HepG2 (cell line): ENCODE measurements at regions of chr16 and their contacts with region 1.

Region 1: GRCh38 chr16:65671-66137 is 6.7 kb downstream of the RHBDF1 start:
- DNase-seq: peak; percentile 56
- ATAC-seq: peak; percentile 82
- H3K4me3 ChIP-seq: no peak overlapping the region
- H3K27ac ChIP-seq: no peak overlapping the region
- H3K4me1 ChIP-seq: peaks cover 46% of the 10 kb centered on the region
- H3K27me3 ChIP-seq: no peaks in the 10 kb centered on the region
- CTCF ChIP-seq: peak; percentile 99
- EP300 ChIP-seq: no peak
- POLR2A ChIP-seq: no peak
- RAD21 ChIP-seq: peak; percentile 99

Region 2: GRCh38 chr16:38939-39892 is 26.5 kb before region 1 on chr16:
- CTCF ChIA-PET with region 1: no interaction called
- POLR2A ChIA-PET with region 1: no interaction called
- in situ Hi-C with region 1: no loop called
- intact Hi-C with region 1: no loop called
- DNase-seq: no peak
- ATAC-seq: no peak
- H3K4me3 ChIP-seq: no peak overlapping the region
- H3K27ac ChIP-seq: no peak overlapping the region
- H3K4me1 ChIP-seq: peaks cover 14% of the 10 kb centered on the region
- H3K27me3 ChIP-seq: no peaks in the 10 kb centered on the region
- CTCF ChIP-seq: no peak
- EP300 ChIP-seq: no peak
- POLR2A ChIP-seq: no peak; a peak in 1 of 4 replicates
- RAD21 ChIP-seq: no peak

Region 3: DNA sequence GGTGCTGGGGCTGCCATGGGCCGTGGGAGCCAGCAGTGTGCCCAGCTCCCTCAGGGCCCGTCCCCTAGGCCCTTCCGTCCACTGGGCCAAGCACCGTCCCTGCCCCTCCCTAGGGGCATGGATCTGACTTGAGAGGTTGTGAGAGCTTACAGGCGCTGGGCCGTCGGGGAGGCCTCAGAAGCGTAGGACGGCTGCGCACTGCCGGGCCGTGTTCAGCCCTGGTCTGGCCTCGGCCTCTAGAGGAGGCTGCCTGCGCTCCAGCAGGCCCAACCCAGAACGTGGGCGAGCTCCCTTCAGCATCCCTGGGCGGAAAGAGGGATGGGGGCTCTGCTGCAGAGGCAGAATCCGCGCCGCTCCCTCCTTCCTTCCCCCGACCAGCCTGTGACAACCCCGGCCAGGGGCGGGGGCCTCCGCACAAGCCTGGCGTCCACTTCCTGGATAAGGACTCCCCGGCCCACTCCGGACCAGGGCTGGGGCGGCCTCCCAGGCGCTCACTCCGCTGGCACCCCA is 11.6 kb after region 1 on chr16:
- CTCF ChIA-PET with region 1: interaction called, 11 read pairs
- POLR2A ChIA-PET with region 1: interaction called, 6 read pairs
- in situ Hi-C with region 1: no loop called
- intact Hi-C with region 1: no loop called
- DNase-seq: peak; percentile 29
- ATAC-seq: peak; percentile 34
- H3K4me3 ChIP-seq: peak overlapping the region; percentile 63 to 84 (median 80)
- H3K27ac ChIP-seq: peak overlapping the region; percentile 62
- H3K4me1 ChIP-seq: peaks cover 62% of the 10 kb centered on the region
- H3K27me3 ChIP-seq: peaks cover 2 to 8% of the 10 kb centered on the region in 2 experiments; a peak in 2 of 5 replicates
- CTCF ChIP-seq: no peak
- EP300 ChIP-seq: no peak
- POLR2A ChIP-seq: no peak
- RAD21 ChIP-seq: no peak

Region 4: GRCh38 chr16:96935-97381 is 31.3 kb after region 1 on chr16:
- CTCF ChIA-PET with region 1: interaction called, 155 read pairs
- POLR2A ChIA-PET with region 1: interaction called, 11 read pairs
- in situ Hi-C with region 1: no loop called
- intact Hi-C with region 1: loop called (anchors 1 kb)
- DNase-seq: peak; percentile 81
- ATAC-seq: peak; percentile 79
- H3K4me3 ChIP-seq: no peak overlapping the region
- H3K27ac ChIP-seq: no peak overlapping the region
- H3K4me1 ChIP-seq: peaks cover 25% of the 10 kb centered on the region
- H3K27me3 ChIP-seq: no peaks in the 10 kb centered on the region
- CTCF ChIP-seq: peak; percentile 100
- EP300 ChIP-seq: no peak
- POLR2A ChIP-seq: no peak
- RAD21 ChIP-seq: peak; percentile 97

Region 5: GRCh38 chr16:129075-129474 is 63.4 kb after region 1 on chr16:
- CTCF ChIA-PET with region 1: no interaction called
- POLR2A ChIA-PET with region 1: no interaction called
- in situ Hi-C with region 1: no loop called
- intact Hi-C with region 1: no loop called
- DNase-seq: no peak
- ATAC-seq: no peak
- H3K4me3 ChIP-seq: no peak overlapping the region
- H3K27ac ChIP-seq: no peak overlapping the region
- H3K4me1 ChIP-seq: no peaks in the 10 kb centered on the region
- H3K27me3 ChIP-seq: no peaks in the 10 kb centered on the region
- CTCF ChIP-seq: no peak
- EP300 ChIP-seq: no peak
- POLR2A ChIP-seq: no peak
- RAD21 ChIP-seq: no peak